CD8-positive, alpha-beta T cell (primary cell): ENCODE measurements at regions of chr6 and their contacts with region 1.

Region 1: GRCh38 chr6:73388800-73389512 is 5.7 kb upstream of the DDX43 start:
- DNase-seq: peak in 8 of 9 experiments; percentile 38 to 76 (median 57)
- ATAC-seq: peak; percentile 71
- H3K4me3 ChIP-seq: peak overlapping the region; percentile 54 to 67
- H3K4me3 Mint-ChIP-seq: peak overlapping the region; percentile 78
- H3K27ac ChIP-seq: peak overlapping the region; percentile 28 to 72
- H3K27ac Mint-ChIP-seq: peak overlapping the region; percentile 45
- H3K4me1 ChIP-seq: peaks cover 4% of the 10 kb centered on the region
- H3K4me1 Mint-ChIP-seq: peaks cover 12% of the 10 kb centered on the region
- H3K27me3 ChIP-seq: no peaks in the 10 kb centered on the region
- H3K27me3 Mint-ChIP-seq: no peaks in the 10 kb centered on the region
- CTCF ChIP-seq: no peak

Region 2: DNA sequence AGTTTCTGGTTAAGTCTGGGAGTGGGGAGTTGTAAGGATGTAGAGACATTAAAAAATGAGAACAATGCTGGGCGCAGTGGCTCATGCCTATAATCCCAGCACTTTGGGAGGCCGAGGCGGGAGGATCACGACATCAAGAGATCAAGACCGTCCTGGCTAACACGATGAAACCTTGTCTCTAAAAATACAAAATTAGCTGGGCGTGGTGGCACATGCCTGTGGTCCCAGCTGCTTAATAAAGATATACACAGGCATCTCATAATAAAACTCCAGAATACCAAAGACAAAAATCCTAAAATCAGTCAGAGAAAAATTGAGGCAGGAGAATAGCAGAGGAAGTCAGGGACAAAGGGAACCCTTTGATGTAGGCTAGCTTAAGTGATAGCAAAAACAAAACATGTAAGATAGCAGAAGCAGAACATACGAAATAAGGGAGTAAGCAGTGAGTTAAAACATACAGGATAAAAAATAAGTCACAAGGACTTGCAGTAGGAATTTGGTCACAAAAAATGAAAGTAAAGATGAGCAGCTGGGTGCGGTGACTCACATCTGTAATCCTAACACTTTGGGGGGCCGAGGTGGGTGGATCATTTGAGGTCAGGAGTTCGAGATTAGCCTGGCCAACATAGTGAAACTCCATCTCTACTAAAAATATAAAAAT is 29.3 kb after region 1 on chr6:
- CTCF ChIA-PET with region 1: interaction called, 3 read pairs
- POLR2A ChIA-PET with region 1: no interaction called
- intact Hi-C with region 1: loop called in 1 of 2 experiments (anchors 2 kb)
- DNase-seq: peak in 1 of 9 experiments; percentile 14
- ATAC-seq: no peak
- H3K4me3 ChIP-seq: no peak overlapping the region
- H3K4me3 Mint-ChIP-seq: no peak overlapping the region
- H3K27ac ChIP-seq: no peak overlapping the region
- H3K27ac Mint-ChIP-seq: peak overlapping the region; percentile 69
- H3K4me1 ChIP-seq: peaks cover 17% of the 10 kb centered on the region
- H3K4me1 Mint-ChIP-seq: peaks cover 20% of the 10 kb centered on the region
- H3K27me3 ChIP-seq: no peaks in the 10 kb centered on the region
- H3K27me3 Mint-ChIP-seq: no peaks in the 10 kb centered on the region
- CTCF ChIP-seq: no peak